Endothelial cell of umbilical vein (primary cell): ENCODE measurements at regions of chr19 and their contacts with region 1.

Region 1: DNA sequence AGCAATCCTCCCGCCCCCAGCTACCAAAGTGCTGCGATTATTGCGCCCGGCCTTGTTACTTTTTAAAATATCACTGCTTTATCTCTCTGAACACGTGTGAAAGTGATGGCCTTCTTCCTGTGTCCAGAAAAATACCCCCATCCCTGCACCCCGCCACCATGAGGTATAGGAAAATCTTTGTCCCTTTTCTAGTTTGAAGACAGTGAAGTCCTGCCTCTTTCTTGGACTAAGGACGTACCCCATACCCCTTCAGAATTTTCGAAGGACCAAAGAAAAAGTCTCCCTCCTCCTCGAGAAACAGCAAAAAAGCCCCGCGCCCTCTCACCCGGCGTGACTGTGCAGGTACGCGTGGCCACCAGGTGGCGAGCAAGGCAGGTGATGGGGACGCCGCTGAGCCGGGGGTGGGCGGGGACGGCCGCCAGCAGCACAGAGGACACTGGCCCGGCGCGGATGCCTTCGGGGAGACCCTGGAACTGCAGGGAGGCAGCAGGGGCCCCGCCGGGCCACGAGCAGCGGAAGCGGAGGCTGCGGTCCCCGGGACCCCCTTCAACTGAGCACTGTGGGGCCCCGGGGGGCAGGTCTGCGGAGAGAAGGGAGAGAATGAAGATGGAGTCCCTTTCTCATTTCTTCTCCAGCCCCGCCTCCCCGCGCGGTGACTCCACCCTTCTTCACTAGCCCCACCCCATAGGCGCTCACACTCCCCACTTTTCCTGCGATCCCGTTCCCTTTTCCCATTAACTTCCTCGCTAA is 3.2 kb downstream of the VSIG10L start:
- DNase-seq: peak; percentile 86
- H3K4me3 ChIP-seq: peak overlapping the region; percentile 55 to 82 (median 73)
- H3K27ac ChIP-seq: no peak overlapping the region
- H3K4me1 ChIP-seq: peaks cover 8% of the 10 kb centered on the region
- H3K27me3 ChIP-seq: no peaks in the 10 kb centered on the region
- CTCF ChIP-seq: peak; percentile 76 to 88
- POLR2A ChIP-seq: no peak

Region 2: DNA sequence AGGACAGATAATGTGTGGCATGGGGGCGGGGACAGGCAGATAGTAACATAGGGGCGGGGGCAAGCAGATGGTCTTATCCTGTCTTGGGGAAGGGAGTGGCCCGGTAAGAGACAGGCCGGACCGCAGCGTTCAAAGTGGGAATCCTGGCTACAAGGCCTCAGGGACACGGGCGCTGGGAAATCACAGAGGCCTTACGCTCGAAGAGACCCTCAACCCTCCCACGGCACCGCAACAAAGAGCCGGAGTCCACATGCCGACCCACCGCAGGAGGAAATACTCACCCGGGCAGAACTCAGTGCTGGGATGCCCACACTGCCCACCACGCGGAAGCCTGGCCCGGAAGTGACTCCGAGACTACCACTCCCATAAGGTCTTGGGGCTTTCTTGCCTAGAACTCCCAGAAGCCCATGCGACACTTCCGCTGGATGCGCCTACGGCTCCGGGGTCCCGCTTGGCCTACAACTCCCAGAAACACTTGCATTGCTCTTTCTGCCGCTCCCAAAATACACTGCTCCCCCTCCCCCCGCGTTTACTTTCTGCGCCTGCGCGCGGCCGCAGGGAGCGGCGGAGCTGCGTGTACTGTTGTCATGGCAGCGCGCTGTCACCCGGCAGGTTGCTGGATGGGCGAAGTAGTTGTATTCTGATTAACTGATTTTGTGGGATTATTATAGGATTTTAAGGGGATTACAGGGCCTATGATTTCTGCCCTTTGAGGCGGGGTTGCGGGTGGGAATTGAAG is 230.5 kb before region 1 on chr19 and contains the start of gene CTU1:
- CTCF ChIA-PET with region 1: no interaction called
- POLR2A ChIA-PET with region 1: no interaction called
- dilution Hi-C with region 1: no loop called
- intact Hi-C with region 1: loop called (anchors 5 kb)
- DNase-seq: peak; percentile 99
- H3K4me3 ChIP-seq: peak within 1 kb of the TSS; percentile 56 to 65 (median 64)
- H3K27ac ChIP-seq: peak within 1 kb of the TSS; percentile 51
- H3K4me1 ChIP-seq: peaks cover 11% of the 10 kb centered on the region
- H3K27me3 ChIP-seq: peaks cover 0 to 9% of the 10 kb centered on the region in 2 experiments
- CTCF ChIP-seq: no peak
- POLR2A ChIP-seq: peak; percentile 89
- total RNA-seq, gene CTU1: 8.2 and 8.7 TPM in 2 replicates

Region 3: DNA sequence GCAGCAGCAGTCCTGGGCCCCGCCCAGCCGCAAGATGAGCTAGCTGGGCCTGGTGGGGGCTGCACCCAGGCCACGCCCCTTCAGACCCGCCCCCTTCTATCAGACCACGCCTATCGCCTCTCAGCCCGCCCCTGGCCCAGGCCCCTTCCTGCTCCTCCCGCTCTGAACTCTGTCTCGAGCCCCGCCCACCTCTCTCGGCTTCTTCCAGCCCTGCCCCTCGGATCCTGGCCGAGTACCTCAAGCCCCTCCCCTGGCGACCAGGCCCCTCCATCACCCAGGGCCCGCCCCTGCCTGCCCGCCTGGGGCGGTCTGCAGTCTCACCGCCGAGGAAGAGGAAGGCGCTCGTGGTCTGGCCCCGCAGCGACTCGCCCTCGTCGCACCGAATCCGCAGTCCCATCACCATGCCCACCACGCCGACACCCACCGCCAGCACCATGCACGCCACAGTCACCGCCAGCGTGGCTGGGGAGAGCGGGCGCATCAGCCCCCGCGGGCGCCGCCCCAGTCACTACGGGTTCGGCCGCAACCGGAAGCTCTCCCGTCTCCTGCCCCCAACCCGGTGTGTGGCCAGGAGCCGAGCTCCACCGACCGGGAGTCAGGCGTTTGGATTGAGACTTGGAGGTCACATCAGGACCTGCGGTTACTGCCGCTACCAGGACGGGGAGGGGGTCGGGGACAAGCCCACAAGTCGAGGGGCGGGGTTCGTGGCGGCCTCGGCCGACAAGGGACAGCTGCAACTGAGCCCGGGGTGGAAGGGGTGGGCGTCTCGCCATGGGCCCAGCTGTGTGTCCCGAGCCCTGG is 29.0 kb after region 1 on chr19:
- CTCF ChIA-PET with region 1: interaction called, 27 read pairs
- POLR2A ChIA-PET with region 1: interaction called, 8 read pairs
- dilution Hi-C with region 1: no loop called
- intact Hi-C with region 1: loop called (anchors 1 kb)
- DNase-seq: peak; percentile 99
- H3K4me3 ChIP-seq: peak overlapping the region; percentile 6 to 63 (median 53)
- H3K27ac ChIP-seq: peak overlapping the region; percentile 19
- H3K4me1 ChIP-seq: peaks cover 15% of the 10 kb centered on the region
- H3K27me3 ChIP-seq: no peaks in the 10 kb centered on the region
- CTCF ChIP-seq: no peak
- POLR2A ChIP-seq: peak; percentile 50

Region 4: GRCh38 chr19:51407511-51408131 is 68.9 kb after region 1 on chr19:
- CTCF ChIA-PET with region 1: interaction called, 17 read pairs
- POLR2A ChIA-PET with region 1: no interaction called
- dilution Hi-C with region 1: no loop called
- intact Hi-C with region 1: no loop called
- DNase-seq: peak; percentile 27
- H3K4me3 ChIP-seq: no peak overlapping the region
- H3K27ac ChIP-seq: no peak overlapping the region
- H3K4me1 ChIP-seq: no peaks in the 10 kb centered on the region
- H3K27me3 ChIP-seq: no peaks in the 10 kb centered on the region
- CTCF ChIP-seq: peak; percentile 13 to 38
- POLR2A ChIP-seq: no peak

Region 5: GRCh38 chr19:51688672-51689571 is 350.2 kb after region 1 on chr19:
- CTCF ChIA-PET with region 1: interaction called, 5 read pairs
- POLR2A ChIA-PET with region 1: no interaction called
- dilution Hi-C with region 1: no loop called
- intact Hi-C with region 1: loop called (anchors 2 kb)
- DNase-seq: peak; percentile 92
- H3K4me3 ChIP-seq: peak overlapping the region; percentile 73 to 94 (median 91)
- H3K27ac ChIP-seq: peak overlapping the region; percentile 59
- H3K4me1 ChIP-seq: peaks cover 24% of the 10 kb centered on the region
- H3K27me3 ChIP-seq: no peaks in the 10 kb centered on the region
- CTCF ChIP-seq: peak in 1 of 2 donors; percentile 3
- POLR2A ChIP-seq: no peak